Spleen (tissue), 13 donors: ENCODE measurements at regions of chr22 and their contacts with region 1.

Region 1: GRCh38 chr22:19143967-19144400 is 467 bp downstream of the ESS2 start:
- DNase-seq: peak; percentile 74
- H3K4me3 ChIP-seq: peak overlapping the region; percentile 68 to 97 (median 82)
- H3K27ac ChIP-seq: peak overlapping the region; percentile 75 to 94 (median 84)
- H3K4me1 ChIP-seq: peaks cover 8 to 35% (median 22%) of the 10 kb centered on the region in 6 donors
- H3K27me3 ChIP-seq: peaks cover 0 to 23% (median 12%) of the 10 kb centered on the region in 7 donors
- CTCF ChIP-seq: no peak
- POLR2A ChIP-seq: no peak

Region 2: GRCh38 chr22:19011075-19011474 is 132.9 kb before region 1 on chr22:
- intact Hi-C with region 1: no loop called
- DNase-seq: no peak
- H3K4me3 ChIP-seq: no peak overlapping the region
- H3K27ac ChIP-seq: no peak overlapping the region
- H3K4me1 ChIP-seq: no peaks in the 10 kb centered on the region
- H3K27me3 ChIP-seq: peaks cover 0 to 27% (median 0%) of the 10 kb centered on the region in 7 donors
- CTCF ChIP-seq: no peak
- POLR2A ChIP-seq: no peak

Region 3: DNA sequence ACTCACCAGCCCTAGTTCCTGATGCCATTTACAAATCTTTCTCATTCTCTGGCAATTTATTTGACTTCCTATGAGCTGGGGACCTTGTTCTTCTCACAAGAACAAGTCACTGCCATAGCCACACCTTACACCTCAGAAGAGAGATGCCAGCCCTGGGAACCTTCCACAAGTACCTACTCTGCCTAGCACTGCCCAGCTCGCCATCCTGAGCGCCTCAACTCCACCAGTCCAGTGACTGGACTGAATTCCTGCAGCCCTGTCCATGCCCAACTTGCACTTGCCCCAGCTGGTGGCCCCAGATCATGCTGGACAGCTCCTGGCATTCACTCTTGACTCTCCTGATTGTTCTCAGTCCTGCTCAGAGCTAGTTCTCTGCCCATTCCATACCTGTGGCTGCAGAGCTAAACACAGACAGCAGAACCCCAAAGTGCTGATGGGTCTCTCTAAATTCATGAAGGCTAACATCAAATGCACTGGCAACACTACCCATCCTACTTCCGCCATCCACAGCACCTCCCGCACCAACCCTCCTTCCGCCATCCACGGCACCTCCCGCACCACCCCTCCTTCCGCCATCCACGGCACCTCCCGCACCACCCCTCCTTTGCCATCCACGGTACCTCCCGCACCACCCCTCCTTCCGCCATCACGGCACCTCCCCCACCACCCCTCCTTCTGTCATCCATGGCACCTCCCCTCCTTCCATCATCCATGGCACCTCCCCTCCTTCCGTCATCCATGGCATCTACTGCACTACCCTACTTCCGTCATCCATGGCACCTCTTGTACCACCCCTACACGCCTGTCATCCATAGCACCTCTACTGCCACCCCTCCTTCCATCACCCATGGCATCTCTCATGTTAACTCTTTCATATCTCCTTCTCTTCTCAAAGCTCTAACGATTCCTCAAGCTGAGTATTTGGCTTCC is 58.1 kb after region 1 on chr22:
- intact Hi-C with region 1: no loop called
- DNase-seq: no peak
- H3K4me3 ChIP-seq: no peak overlapping the region
- H3K27ac ChIP-seq: no peak overlapping the region
- H3K4me1 ChIP-seq: no peaks in the 10 kb centered on the region
- H3K27me3 ChIP-seq: no peaks in the 10 kb centered on the region
- CTCF ChIP-seq: no peak
- POLR2A ChIP-seq: no peak

Region 4: GRCh38 chr22:19479357-19480172 is 335.6 kb after region 1 on chr22 and contains the start of gene CDC45:
- intact Hi-C with region 1: loop called (anchors 10 kb)
- DNase-seq: peak; percentile 97
- H3K4me3 ChIP-seq: peak within 1 kb of the TSS; percentile 87 to 99 (median 97)
- H3K27ac ChIP-seq: peak within 1 kb of the TSS; percentile 97 to 99 (median 99)
- H3K4me1 ChIP-seq: peaks cover 14 to 56% (median 42%) of the 10 kb centered on the region in 6 donors
- H3K27me3 ChIP-seq: no peaks in the 10 kb centered on the region
- CTCF ChIP-seq: peak in 2 of 11 experiments; percentile 10 to 32
- POLR2A ChIP-seq: peak in 1 of 3 donors; percentile 13
- total RNA-seq, gene CDC45: 1.5 to 7.3 (median 4.5) TPM